Activated CD4-positive, alpha-beta T cell treated with anti-CD3 and anti-CD28 coated beads, Interleukin-2, amount 10 ng/mL, durations not matched to agents 24 days and 14 days (primary cell): ENCODE measurements at regions of chr3 and their contacts with region 1.

Region 1: DNA sequence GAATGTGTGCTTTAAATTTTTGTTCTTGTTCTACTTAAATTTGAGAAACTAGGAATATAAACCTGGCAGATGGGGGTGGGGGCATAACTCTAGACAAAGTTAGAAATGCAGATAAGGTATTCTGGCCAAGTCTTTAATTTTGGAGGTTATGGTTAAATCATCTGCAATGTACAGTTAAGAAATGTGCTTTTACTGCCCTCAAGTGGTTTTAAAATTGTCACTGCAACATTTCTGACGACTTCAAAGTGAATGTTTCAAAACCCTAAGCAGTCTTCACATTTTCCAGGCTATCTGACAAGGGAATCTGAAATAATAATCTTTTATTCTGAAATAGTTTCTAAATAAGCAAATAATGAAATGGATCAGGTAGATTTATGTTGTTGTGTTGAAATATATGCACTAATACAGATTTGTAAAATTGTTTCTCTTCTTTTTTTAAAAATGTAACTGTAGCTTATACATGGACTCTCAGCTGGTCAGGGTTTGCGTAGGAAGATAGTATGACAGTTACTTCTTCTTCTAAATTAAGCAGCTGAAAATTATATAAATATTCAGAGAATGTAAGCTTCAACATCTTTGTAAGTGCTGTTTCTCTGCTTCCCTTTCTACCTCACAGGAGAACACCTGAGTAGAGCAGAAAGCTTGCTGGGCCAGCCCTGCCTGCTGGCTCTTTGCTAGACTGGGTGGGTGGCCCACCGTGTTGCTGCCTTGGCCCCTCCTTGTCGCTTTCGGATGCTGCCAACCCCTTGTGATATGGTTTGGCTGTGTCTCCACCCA is 45.0 kb downstream of the SUCNR1 start:
- DNase-seq: no peak
- H3K4me3 Mint-ChIP-seq: no peak overlapping the region
- H3K27ac Mint-ChIP-seq: no peak overlapping the region
- H3K4me1 Mint-ChIP-seq: no peaks in the 10 kb centered on the region
- H3K27me3 Mint-ChIP-seq: peaks cover 6% of the 10 kb centered on the region

Region 2: DNA sequence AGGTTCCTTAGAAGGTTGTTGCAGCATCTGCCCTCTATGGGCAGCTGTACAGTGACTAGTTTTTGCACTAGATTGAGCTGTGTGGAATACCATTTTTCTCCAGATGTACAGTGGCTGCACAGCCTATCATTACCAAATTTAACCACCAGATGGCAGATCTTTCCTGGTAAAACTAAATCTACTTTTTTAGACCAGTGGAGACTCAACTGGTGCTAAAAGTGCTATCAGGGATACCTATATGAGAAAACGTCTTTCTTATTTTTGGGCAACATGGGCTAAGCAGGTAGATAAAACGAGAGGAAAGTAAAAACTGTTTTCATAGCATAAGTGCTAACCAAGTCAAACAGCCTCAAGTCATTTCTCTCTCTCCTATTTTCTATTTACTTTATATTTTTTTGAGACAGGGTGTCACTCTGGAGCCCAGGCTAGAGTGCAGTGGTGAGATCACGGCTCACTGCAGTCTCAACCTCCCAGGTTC is 478.8 kb before region 1 on chr3:
- intact Hi-C with region 1: loop called (anchors 5 kb)
- DNase-seq: peak; percentile 70
- H3K4me3 Mint-ChIP-seq: no peak overlapping the region
- H3K27ac Mint-ChIP-seq: no peak overlapping the region
- H3K4me1 Mint-ChIP-seq: no peaks in the 10 kb centered on the region
- H3K27me3 Mint-ChIP-seq: peaks cover 6% of the 10 kb centered on the region

Region 3: GRCh38 chr3:151468284-151468917 is 450.0 kb before region 1 on chr3:
- intact Hi-C with region 1: loop called (anchors 1 kb)
- DNase-seq: peak; percentile 82
- H3K4me3 Mint-ChIP-seq: no peak overlapping the region
- H3K27ac Mint-ChIP-seq: no peak overlapping the region
- H3K4me1 Mint-ChIP-seq: no peaks in the 10 kb centered on the region
- H3K27me3 Mint-ChIP-seq: peaks cover 15% of the 10 kb centered on the region